ENCODE measurements at regions of chr12 and their contacts with region 1.

Region 1: DNA sequence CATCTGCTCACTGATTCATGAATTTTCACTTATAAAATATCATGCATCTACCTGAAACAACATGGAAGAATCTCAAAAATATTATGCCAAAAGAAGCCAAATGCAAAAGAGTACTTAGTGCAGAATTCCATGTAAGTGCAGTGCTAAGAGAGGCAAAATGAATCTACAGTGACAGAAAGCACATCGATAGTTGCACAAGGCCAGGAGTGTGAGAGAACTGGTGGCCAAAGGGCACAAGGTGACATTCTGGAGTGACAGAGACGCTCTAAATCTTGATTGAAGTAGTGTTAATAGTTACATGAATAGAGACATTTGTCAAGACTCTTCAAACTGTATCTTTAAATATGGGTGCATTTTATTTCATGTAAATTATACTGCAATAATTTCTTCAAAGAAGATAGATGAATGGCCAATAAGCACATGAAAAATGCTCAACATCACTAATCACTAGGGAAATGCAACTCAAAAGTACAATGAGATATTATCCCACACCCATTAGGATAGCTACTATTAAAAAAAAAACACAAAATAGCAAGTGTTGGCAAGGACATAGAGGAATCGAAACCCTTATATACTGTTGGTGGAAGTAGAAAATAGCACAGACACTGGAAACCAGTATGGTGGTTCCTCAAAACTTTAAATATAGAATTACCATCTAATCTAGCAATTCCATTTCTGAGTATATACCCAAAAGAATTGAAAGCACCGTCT is 71.7 kb upstream of the KICS2 start:
- DNase-seq: no peak
- H3K4me3 Mint-ChIP-seq: no peak overlapping the region
- H3K27ac Mint-ChIP-seq: no peak overlapping the region
- H3K4me1 Mint-ChIP-seq: peaks cover 4% of the 10 kb centered on the region
- H3K27me3 Mint-ChIP-seq: peaks cover 14% of the 10 kb centered on the region

Region 2: DNA sequence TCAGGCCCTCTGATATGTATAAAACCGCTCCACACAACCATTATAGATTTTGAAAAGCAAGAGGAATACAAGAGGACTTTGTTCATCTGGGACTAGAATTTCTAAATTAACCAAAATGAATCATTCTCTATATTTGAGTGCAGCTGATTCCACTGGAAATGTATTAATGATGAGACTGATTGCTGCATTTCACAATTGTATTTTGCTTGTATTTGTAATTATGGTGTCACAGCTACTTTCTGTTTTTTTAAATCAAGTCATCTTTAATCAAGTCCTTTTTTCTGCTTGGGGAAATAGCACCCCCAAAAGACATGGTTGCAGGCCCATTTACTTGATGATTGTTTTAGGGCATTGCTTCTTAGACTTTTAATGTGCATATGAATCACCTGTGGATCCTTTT is 234.1 kb before region 1 on chr12:
- intact Hi-C with region 1: no loop called
- DNase-seq: no peak
- H3K4me3 Mint-ChIP-seq: no peak overlapping the region
- H3K27ac Mint-ChIP-seq: no peak overlapping the region
- H3K4me1 Mint-ChIP-seq: no peaks in the 10 kb centered on the region
- H3K27me3 Mint-ChIP-seq: peaks cover 3% of the 10 kb centered on the region

Region 3: DNA sequence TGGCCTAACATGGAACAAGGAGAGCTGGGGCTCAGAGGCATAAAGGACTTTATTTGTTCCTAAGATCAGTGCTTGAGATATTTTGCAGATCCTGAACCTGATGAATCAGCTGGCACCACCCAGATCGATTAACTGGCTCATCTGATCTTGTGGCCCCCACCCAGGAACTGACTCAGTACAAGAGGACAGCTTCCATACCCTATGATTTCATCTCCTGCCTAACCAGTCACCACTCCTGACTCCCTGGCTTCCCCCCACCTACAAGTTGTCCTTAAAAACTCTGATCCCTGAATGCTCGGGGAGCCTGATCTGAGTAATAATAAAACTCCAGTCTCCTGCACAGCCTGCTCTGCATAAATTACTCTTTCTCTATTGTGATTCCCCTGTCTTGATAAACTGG is 91.7 kb after region 1 on chr12:
- intact Hi-C with region 1: loop called (anchors 5 kb)
- DNase-seq: no peak
- H3K4me3 Mint-ChIP-seq: no peak overlapping the region
- H3K27ac Mint-ChIP-seq: peak overlapping the region; percentile 80
- H3K4me1 Mint-ChIP-seq: peaks cover 28% of the 10 kb centered on the region
- H3K27me3 Mint-ChIP-seq: peaks cover 3% of the 10 kb centered on the region

Region 4: DNA sequence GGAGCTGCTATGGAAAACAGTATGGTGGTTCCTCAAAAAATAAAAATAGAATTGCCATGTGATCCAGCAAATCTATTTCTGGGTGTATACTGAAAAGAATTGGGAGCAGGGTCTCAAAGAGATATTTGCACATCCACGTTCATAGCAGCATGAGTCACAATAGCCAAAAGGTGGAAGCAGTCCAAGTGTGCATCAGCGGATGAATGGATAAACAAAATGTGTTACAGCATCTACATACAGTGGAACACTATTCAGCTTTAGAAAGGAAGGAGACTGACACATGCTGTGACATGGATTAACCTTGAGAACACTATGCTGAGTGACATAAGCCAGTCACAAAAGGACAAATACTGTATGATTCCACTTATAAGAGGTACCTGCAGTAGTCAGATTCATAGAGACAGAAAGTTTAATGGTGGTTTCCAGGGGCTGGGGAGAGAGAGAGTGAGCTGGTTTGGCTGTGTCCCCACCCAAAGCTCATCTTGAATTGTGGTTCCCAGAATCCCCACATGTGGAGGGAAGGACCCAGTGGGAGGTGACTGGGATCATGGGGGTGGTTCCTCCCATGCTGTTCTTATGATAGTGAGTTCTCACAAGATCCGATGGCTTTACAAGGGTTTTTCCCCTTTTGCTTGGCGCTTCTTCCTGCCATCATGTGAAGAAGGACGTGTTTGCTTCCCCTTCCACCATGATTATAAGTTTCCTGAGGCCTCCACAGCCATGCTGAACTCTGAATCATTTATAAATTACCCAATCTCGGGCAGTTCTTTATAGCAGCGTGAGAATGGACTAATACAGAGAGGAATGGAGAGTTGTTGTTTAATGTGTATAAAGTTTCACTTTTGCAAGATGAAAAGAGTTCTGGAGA is 513.0 kb after region 1 on chr12:
- intact Hi-C with region 1: no loop called
- DNase-seq: no peak
- H3K4me3 Mint-ChIP-seq: no peak overlapping the region
- H3K27ac Mint-ChIP-seq: no peak overlapping the region
- H3K4me1 Mint-ChIP-seq: peaks cover 6% of the 10 kb centered on the region
- H3K27me3 Mint-ChIP-seq: peaks cover 35% of the 10 kb centered on the region

Measured in activated T-helper 2 cell treated with anti-CD3 and anti-CD28 coated beads, Interferon-gamma antibody, Interleukin-2, Interleukin-4, amounts not matched to agents 10 μg/mL and 5 μg/mL and 100 μg/mL, durations not matched to agents 14 hours and 24 hours and 36 hours (primary cell).